Activated naive CD4-positive, alpha-beta T cell treated with anti-CD3 and anti-CD28 coated beads for 36 hours (primary cell): ENCODE measurements at regions of chr7 and their contacts with region 1.

Region 1: DNA sequence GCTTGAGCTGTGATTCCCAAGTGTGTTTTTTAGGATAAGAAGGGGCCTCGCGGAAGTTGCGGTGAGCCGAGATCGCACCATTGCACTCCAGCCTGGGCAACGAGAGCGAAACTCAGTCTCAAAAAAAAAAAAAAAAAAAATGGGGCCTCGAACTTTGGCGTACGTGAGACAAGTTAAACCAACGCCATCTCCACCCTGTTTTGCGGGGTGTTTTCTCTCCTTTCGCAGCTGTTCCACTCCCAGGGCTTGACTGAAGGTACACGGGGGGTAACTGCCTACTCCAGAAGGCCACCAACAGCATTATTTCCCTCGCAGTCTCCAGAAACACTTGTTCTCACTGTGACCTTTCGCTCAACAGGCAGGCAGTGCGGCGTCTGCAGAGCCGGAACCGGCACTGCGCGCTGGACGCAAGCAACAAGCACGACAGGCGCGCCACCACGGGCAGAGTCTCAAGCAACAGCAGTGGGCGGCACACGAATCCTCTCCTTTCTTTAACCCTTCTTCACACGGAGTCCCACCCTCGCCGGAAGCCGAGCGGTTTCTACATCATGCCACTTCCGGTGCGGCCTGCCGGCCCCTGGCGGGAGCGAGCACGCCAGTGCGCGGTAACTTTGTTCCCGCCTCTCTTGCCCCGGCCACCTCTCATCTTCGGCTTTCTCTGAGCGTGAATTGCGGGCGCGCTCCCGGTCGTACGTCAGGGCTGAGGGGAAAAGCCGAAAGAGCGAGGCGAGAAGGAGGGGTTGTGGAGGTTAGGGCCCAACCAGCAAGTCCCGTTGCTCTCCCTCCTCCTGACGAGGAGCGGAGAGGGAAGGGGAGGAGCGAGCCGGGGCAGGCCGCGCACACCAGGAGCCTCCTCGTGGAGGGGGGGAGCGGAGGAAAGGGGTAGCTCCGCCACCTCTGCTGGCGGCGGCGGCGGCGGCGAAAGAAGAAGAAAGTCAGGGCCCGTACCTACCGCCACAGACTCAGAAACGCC is 814 bp upstream of the CDK13 start:
- DNase-seq: peak; percentile 99
- H3K4me3 Mint-ChIP-seq: peak overlapping the region; percentile 97
- H3K27ac Mint-ChIP-seq: peak overlapping the region; percentile 99
- H3K4me1 Mint-ChIP-seq: peaks cover 22% of the 10 kb centered on the region
- H3K27me3 Mint-ChIP-seq: no peaks in the 10 kb centered on the region

Region 2: DNA sequence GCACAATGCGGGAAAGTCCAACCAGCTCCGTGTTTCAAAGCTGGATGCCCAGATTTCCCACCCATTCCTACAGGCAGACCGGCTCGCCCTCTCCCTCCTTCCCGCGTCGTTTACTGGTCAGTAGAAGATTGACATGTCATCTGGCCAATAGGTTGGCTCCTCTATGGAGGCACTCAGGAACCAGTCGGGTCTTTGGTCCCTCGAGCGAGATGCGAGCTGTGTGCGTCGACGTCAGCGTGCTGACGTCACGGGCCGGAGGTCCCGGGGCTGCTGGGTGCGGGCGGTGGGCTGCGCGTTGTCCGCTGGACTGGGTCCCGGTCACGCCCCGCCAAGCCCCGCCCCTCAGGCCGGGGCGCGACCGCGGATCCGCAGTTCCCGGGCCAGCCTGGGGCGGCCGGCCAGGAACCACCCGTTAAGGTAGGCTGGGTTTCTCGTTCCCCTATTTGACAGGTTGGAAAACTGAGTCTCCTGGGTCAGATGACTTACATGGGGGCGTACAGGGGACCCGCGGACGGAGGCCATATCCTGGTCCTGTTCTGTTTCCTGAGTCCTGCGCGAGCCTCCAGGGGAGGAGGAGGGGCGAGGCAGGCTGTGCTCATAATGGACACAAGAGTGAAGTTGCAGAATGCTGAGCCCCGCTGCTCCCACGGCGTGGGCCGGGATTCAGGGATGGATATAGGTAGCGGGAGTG is 1771.1 kb before region 1 on chr7 and contains the start of gene STARD3NL:
- CTCF ChIA-PET with region 1: no interaction called
- intact Hi-C with region 1: loop called (anchors 5 kb)
- DNase-seq: peak; percentile 96
- H3K4me3 Mint-ChIP-seq: peak within 1 kb of the TSS; percentile 94
- H3K27ac Mint-ChIP-seq: peak within 1 kb of the TSS; percentile 91
- H3K4me1 Mint-ChIP-seq: peaks cover 33% of the 10 kb centered on the region
- H3K27me3 Mint-ChIP-seq: peaks cover 9% of the 10 kb centered on the region
- total RNA-seq, gene STARD3NL: 23.7 to 25.7 TPM

Region 3: GRCh38 chr7:39589323-39590111 is 359.7 kb before region 1 on chr7:
- CTCF ChIA-PET with region 1: no interaction called
- intact Hi-C with region 1: loop called (anchors 1 kb)
- DNase-seq: peak; percentile 92
- H3K4me3 Mint-ChIP-seq: no peak overlapping the region
- H3K27ac Mint-ChIP-seq: peak overlapping the region; percentile 52
- H3K4me1 Mint-ChIP-seq: peaks cover 39% of the 10 kb centered on the region
- H3K27me3 Mint-ChIP-seq: no peaks in the 10 kb centered on the region

Region 4: DNA sequence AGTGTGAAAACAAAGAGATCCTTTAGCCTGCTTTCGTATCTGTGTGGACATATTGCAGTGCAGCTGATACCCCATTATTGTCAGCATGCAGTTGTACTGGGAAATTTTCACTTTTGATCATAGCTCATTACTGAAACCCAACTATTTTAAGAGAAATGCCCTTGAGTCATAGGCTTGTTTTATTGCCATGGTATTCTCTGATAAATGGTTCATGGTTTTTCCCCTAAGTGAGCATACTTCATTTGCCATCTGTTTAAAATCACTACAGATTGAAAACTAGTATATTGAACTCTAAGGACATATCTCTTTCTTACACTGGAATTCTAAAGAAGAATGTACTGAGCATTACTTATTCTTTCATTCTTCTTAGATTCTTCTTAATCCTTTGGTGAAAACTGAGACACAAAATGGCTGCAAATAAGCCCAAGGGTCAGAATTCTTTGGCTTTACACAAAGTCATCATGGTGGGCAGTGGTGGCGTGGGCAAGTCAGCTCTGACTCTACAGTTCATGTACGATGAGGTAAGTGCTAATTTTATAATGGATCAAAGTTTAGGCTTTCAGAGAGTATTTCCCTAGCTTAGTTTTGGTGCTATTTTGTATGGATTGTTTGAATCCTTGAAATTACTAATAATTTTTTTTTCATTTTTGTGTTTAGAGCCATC is 262.8 kb before region 1 on chr7:
- CTCF ChIA-PET with region 1: no interaction called
- intact Hi-C with region 1: loop called (anchors 1 kb)
- DNase-seq: no peak
- H3K4me3 Mint-ChIP-seq: no peak overlapping the region
- H3K27ac Mint-ChIP-seq: peak overlapping the region; percentile 69
- H3K4me1 Mint-ChIP-seq: peaks cover 65% of the 10 kb centered on the region
- H3K27me3 Mint-ChIP-seq: no peaks in the 10 kb centered on the region

Region 5: DNA sequence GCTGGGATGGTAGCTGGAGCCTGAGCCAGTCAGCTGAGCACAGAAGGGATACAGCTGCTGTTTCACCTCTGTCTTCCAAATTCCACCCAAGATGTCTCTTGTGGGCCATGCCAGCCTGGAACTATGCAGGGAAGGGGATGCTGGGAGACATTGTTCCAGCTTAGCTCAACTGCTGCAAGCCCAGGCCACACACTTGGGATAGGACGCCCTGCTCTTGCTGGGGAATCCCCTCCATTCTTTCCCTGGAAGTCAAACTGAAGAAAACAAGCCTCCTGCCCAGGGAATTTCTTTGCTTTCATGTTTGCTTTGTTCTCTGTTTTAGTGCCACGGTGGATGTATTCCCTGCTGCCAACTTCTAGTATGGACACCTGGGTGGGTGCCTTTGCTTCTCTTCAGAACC is 54.3 kb before region 1 on chr7:
- CTCF ChIA-PET with region 1: interaction called, 11 read pairs
- intact Hi-C with region 1: loop called (anchors 2 kb)
- DNase-seq: no peak
- H3K4me3 Mint-ChIP-seq: no peak overlapping the region
- H3K27ac Mint-ChIP-seq: no peak overlapping the region
- H3K4me1 Mint-ChIP-seq: no peaks in the 10 kb centered on the region
- H3K27me3 Mint-ChIP-seq: no peaks in the 10 kb centered on the region

Region 6: DNA sequence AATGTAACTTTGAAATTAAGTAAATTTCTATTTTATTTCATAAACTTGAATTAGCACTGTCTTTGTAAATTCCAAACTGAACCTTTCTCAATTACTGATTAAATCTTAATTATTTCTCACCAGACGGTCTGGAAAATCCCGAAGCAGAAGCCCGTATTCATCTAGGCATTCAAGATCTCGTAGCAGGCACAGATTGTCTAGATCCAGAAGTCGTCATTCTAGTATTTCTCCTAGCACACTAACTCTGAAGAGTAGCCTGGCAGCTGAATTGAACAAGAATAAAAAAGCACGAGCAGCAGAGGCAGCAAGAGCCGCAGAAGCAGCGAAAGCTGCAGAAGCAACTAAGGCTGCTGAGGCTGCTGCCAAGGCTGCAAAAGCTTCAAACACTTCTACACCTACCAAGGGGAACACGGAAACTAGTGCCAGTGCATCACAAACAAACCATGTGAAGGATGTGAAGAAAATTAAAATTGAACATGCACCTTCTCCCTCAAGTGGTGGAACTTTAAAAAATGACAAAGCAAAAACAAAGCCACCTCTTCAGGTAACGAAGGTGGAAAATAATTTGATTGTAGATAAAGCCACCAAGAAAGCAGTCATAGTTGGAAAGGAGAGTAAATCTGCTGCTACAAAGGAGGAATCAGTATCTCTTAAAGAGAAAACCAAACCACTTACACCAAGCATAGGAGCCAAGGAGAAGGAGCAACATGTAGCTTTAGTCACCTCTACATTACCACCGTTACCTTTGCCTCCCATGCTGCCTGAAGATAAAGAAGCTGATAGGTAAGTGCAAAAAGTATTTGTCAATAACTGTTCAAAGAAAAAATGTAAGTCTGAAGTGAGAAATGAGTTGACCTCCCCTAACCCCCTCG is 38.5 kb after region 1 on chr7:
- CTCF ChIA-PET with region 1: interaction called, 3 read pairs
- intact Hi-C with region 1: loop called (anchors 1 kb)
- DNase-seq: peak; percentile 28
- H3K4me3 Mint-ChIP-seq: peak overlapping the region; percentile 14
- H3K27ac Mint-ChIP-seq: peak overlapping the region; percentile 77
- H3K4me1 Mint-ChIP-seq: peaks cover 50% of the 10 kb centered on the region
- H3K27me3 Mint-ChIP-seq: no peaks in the 10 kb centered on the region

Region 7: GRCh38 chr7:40057292-40057691 is 108.0 kb after region 1 on chr7:
- CTCF ChIA-PET with region 1: interaction called, 31 read pairs
- intact Hi-C with region 1: loop called (anchors 1 kb)
- DNase-seq: no peak
- H3K4me3 Mint-ChIP-seq: no peak overlapping the region
- H3K27ac Mint-ChIP-seq: no peak overlapping the region
- H3K4me1 Mint-ChIP-seq: peaks cover 4% of the 10 kb centered on the region
- H3K27me3 Mint-ChIP-seq: no peaks in the 10 kb centered on the region